ENCODE measurements at regions of chr1 and their contacts with region 1.

Region 1: DNA sequence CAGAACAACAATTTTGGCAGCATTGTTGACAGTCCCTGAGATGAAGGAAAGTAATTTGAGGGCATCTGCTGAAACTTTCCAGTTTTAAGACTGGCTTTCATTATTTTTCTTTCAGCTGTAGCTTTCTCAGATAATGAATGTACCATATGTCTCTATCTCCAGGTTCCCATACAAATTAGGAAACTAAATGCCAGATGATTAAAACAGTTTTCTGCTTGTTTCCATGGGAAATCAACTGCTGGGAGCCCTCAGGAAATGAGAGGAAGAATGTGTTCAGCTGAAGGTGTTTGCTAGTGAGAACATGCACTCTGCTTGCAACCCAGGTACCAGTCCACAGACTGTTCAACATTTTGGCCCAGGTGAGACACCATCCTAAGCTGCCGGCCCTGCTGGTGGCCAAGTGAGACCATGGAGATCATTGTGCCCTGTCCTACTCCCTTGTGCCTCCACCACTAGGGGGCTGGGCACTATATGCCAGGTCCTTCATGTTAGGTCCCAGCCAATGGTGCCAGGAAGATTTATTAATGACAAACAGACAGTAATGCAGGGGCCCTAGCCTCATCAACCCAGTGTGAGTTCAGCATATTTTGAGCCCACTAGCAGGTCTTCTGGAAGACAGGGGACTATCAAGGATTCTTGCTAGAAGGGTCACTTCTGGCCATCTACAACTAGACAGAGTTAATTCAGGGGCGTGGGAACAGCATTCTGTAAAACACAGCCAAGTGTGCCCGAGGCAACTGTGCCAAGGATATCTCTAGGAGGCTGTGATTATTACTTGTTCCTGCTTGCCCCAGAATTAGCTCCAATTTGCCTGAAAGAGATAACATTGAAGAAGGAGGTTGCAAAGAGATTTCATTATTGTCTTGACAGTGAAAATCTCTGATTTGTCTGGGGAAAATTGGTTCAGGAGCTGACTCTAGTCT is 17.0 kb upstream of the LRRC8C start:
- DNase-seq: no peak
- ATAC-seq: no peak
- H3K4me3 Mint-ChIP-seq: no peak overlapping the region
- H3K27ac Mint-ChIP-seq: peak overlapping the region in 8 of 10 donors; percentile 38 to 74 (median 58)
- H3K4me1 Mint-ChIP-seq: peaks cover 30 to 81% (median 70%) of the 10 kb centered on the region in 4 donors
- H3K27me3 Mint-ChIP-seq: no peaks in the 10 kb centered on the region

Region 2: GRCh38 chr1:89598450-89599331 is 17.2 kb before region 1 on chr1:
- POLR2A ChIA-PET with region 1: interaction called, 125 read pairs
- DNase-seq: peak in 3 of 10 donors; percentile 40 to 44 (median 44)
- ATAC-seq: peak; percentile 54 to 74
- H3K4me3 Mint-ChIP-seq: peak overlapping the region in 4 of 10 donors; percentile 10 to 53 (median 47)
- H3K27ac Mint-ChIP-seq: peak overlapping the region; percentile 11 to 88 (median 80)
- H3K4me1 Mint-ChIP-seq: peaks cover 30 to 74% (median 69%) of the 10 kb centered on the region in 4 donors
- H3K27me3 Mint-ChIP-seq: no peaks in the 10 kb centered on the region

Region 3: DNA sequence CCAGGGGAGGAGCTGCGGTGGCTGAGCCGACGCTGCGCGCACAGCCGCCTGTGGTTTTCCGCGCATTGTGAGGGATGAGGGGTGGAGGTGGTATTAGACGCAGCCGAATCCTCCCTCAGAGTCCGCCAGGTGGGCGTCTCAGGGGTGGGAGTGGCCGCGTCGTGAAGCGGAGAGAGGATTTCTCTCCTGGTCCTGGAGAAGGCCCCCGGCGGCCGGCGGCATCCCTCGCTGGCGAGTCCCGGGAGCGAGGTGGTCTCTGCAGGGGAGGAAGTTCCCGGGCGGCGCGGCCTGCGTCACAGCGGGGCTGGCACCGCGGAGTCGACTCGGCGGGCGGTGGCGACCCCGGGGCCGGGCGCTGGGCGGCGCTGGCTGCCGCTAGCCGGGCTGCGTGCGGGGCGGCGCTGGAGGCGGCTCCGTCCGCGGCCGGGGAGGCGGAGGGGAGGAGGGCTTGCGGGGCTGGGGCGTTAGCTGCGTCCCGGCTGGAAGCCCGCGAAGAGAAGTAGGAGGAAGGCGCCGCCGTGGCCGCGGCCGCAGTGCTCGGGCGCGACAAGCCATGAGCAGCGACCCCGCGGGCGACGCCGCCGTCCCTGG is 16.8 kb after region 1 on chr1 and contains the start of gene LRRC8C:
- POLR2A ChIA-PET with region 1: interaction called, 329 read pairs
- DNase-seq: peak; percentile 80 to 97 (median 88)
- ATAC-seq: peak; percentile 79 to 84
- H3K4me3 Mint-ChIP-seq: peak within 1 kb of the TSS; percentile 91 to 98 (median 96)
- H3K27ac Mint-ChIP-seq: peak within 1 kb of the TSS; percentile 94 to 99 (median 98)
- H3K4me1 Mint-ChIP-seq: peaks cover 43 to 85% (median 78%) of the 10 kb centered on the region in 4 donors
- H3K27me3 Mint-ChIP-seq: no peaks in the 10 kb centered on the region
- polyA plus RNA-seq, gene LRRC8C: 10.0 to 19.2 (median 14.2) TPM

Region 4: GRCh38 chr1:89649783-89650182 is 33.8 kb after region 1 on chr1:
- POLR2A ChIA-PET with region 1: no interaction called
- DNase-seq: no peak
- ATAC-seq: no peak
- H3K4me3 Mint-ChIP-seq: peak overlapping the region in 9 of 10 donors; percentile 3 to 72 (median 49)
- H3K27ac Mint-ChIP-seq: peak overlapping the region; percentile 43 to 84 (median 77)
- H3K4me1 Mint-ChIP-seq: peaks cover 30 to 75% (median 64%) of the 10 kb centered on the region in 4 donors
- H3K27me3 Mint-ChIP-seq: no peaks in the 10 kb centered on the region

Region 5: GRCh38 chr1:89698624-89699023 is 82.7 kb after region 1 on chr1:
- POLR2A ChIA-PET with region 1: interaction called, 15 read pairs
- DNase-seq: no peak
- ATAC-seq: peak in 1 of 2 donors; percentile 34
- H3K4me3 Mint-ChIP-seq: peak overlapping the region in 9 of 10 donors; percentile 62 to 87 (median 80)
- H3K27ac Mint-ChIP-seq: peak overlapping the region; percentile 72 to 98 (median 94)
- H3K4me1 Mint-ChIP-seq: peaks cover 40 to 92% (median 87%) of the 10 kb centered on the region in 4 donors
- H3K27me3 Mint-ChIP-seq: no peaks in the 10 kb centered on the region

Region 6: DNA sequence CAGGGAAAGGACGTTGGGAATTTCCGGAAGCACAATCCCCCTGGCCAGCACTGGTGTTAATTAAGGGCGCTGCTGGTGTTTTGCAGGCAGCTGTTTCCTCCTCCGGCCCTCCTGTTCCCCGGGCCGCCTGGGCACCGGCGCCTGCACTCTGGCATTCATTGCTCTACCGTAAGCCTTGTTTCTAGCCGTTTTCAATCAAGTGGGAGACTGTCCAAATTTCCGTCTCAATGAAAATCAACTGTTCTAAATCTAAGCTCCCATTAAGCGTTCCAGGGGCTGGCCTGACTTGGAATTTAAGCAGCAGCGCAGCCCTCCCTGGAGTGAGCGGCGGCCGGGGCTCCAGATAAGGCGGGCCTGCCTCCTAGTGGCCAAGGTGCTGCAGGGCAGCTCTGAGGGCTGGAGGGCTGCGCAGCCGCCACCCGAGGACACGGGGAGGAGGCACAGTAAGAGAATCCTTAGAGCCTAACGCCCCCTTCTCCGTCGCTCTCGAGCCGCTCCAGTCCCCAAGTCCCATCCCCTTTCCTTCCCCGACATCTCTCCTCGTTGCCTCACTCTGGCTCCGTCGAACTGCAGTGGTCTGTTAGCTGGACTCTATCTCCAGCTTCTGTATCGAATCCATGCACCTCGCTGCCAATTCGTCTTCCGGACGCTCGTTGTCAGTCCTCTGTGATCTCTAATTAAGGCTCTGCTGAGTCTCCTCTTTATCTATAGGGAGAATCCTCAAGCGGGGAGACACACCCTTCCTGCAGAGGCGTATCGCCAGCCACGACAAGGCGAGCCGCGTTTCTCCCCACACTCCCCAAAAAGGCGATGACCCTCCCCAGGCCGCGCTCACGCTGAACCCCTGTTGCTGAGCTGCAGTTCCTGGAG is 147.1 kb after region 1 on chr1:
- POLR2A ChIA-PET with region 1: interaction called, 60 read pairs
- DNase-seq: peak; percentile 74 to 93 (median 86)
- ATAC-seq: peak; percentile 98 to 100
- H3K4me3 Mint-ChIP-seq: peak overlapping the region; percentile 78 to 99 (median 92)
- H3K27ac Mint-ChIP-seq: peak overlapping the region; percentile 80 to 97 (median 92)
- H3K4me1 Mint-ChIP-seq: peaks cover 24 to 54% (median 50%) of the 10 kb centered on the region in 4 donors
- H3K27me3 Mint-ChIP-seq: no peaks in the 10 kb centered on the region

Measured in naive thymus-derived CD8-positive, alpha-beta T cell (primary cell).